Mammary epithelial cell (primary cell): ENCODE measurements at regions of chr17 and their contacts with region 1.

Region 1: DNA sequence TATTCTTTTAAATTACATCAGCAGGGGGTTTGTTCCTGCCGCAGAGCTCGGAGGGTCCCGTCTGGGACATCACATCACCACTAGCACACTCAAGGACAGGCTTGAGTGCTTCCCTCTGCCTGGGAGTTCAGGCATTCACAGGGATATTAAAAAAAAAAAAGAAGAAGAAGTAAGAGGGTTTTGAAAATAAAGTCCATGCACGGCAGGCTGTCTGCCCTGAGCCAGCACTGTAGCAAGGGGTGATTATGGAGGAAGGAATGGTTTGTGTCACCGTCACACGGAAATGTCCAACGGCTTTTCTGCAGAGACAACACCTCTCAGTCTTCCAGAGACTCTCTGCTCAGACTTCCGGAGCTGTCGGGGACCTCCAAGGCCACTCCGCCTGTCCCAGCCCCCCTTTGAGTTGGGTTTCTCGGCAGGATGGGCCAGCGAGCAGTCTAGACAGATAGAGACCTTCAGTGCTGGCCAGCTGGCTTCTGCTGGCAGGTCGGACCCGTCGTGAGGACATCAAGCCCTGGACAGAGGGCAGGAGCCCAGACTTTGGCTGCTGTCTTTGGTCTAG is 33.6 kb downstream of the MEOX1 start:
- DNase-seq: no peak
- H3K4me3 ChIP-seq: no peak overlapping the region
- H3K27ac ChIP-seq: no peak overlapping the region
- H3K4me1 ChIP-seq: no peaks in the 10 kb centered on the region
- H3K27me3 ChIP-seq: no peaks in the 10 kb centered on the region
- CTCF ChIP-seq: no peak

Region 2: DNA sequence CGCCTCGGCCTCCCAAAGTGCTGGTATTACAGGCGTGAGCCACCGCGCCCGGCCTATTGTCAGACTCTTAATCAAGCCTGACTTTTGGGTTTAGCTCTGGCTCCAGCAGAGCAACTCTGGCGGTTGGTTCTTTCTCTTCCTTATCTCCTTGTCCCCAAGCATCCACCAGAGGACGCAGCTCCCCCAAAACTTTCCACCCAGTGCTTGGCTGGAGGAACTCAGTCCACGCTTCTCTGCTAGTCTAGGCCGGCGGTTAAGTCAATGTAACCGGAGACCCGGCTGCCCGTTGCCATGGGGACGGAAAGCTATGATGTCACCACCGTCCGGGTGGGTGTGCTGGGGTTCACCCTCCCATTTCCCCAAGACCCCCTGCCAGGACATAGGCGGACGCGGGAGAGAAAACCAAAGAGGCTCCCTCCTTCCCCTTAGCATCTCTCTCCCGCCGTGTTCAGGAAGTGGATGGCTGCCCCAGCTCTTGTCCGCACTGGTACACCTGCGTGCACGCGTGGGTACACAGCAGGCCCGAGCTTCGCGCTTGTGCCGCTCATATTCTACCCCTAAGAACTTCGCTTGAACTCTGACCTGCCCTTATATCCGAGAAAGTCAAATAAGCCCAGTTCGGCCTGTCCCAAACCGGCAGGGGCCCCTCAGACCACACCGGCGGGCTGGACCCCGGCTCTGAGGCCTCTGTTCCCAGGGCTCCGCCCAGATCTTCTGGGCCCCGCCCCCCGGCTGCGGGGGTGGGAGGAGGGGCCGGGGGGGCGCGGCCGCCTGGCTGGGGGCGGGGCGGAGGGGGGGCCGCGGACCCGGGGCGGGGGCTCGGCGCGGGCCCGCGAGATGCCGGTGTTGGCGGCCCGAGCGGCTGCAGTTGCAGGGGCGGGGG is 603.5 kb before region 1 on chr17 and contains the start of gene RND2:
- CTCF ChIA-PET with region 1: no interaction called
- dilution Hi-C with region 1: no loop called
- in situ Hi-C with region 1: no loop called
- intact Hi-C with region 1: no loop called
- DNase-seq: peak; percentile 84
- H3K4me3 ChIP-seq: peak within 1 kb of the TSS; percentile 50 to 60 (median 52)
- H3K27ac ChIP-seq: peak within 1 kb of the TSS; percentile 47
- H3K4me1 ChIP-seq: peaks cover 15% of the 10 kb centered on the region
- H3K27me3 ChIP-seq: no peaks in the 10 kb centered on the region
- CTCF ChIP-seq: peak; percentile 62 to 87
- total RNA-seq, gene RND2: 0.17 to 0.85 TPM

Region 3: DNA sequence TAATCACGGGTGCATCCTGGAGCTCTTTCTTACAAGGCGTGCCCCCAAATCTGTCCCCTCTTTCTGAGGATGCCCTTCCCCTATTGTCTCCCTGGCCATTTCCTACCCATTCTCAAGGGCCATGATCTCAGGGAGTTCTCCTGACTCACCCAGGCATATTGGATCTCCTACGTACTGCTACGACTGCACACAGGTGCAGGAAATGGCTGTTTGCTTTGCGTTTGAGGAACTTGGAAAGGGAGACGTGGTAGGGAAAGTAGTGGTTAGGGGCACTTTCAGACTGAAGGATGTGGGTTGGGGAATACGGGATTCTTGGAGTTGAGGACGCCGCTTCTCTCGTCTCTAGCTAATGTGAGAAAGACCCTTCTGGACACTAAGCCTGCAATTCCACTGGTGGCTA is 52.3 kb after region 1 on chr17:
- CTCF ChIA-PET with region 1: no interaction called
- dilution Hi-C with region 1: loop called (anchors 10 kb)
- in situ Hi-C with region 1: no loop called
- intact Hi-C with region 1: no loop called
- DNase-seq: no peak
- H3K4me3 ChIP-seq: no peak overlapping the region
- H3K27ac ChIP-seq: no peak overlapping the region
- H3K4me1 ChIP-seq: no peaks in the 10 kb centered on the region
- H3K27me3 ChIP-seq: no peaks in the 10 kb centered on the region
- CTCF ChIP-seq: no peak

Region 4: DNA sequence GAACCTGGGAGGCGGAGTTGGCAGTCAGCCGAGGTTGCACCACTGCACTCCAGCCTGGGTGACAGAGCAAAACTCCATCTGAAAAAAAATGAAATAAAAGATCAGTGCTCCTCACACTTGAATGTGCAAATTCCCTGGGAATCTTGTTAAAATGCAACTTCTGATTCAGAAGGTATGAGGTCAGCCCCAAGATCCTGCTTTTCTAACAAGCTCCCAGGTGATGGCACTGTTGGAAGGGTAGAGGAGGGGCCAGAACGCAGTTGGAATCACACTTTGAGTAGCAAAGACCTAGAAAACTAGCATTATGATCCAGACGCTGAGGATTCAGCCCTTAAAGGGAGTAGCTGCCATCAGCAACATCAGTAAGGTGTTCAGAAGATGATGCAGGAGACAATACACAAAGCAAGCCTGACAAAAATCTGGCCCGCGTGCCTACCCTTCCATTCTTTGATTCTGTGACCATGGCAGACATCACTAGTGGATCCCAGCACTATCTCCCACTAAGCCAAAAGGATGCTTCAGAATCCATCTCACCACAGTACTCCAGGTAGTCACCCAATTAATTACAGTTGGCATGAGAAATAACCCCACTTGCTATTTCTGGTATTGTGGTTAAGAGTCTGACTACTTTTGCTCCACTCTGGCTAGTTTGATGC is 995.0 kb after region 1 on chr17:
- CTCF ChIA-PET with region 1: no interaction called
- dilution Hi-C with region 1: no loop called
- in situ Hi-C with region 1: no loop called
- intact Hi-C with region 1: no loop called
- DNase-seq: no peak
- H3K4me3 ChIP-seq: no peak overlapping the region
- H3K27ac ChIP-seq: no peak overlapping the region
- H3K4me1 ChIP-seq: no peaks in the 10 kb centered on the region
- H3K27me3 ChIP-seq: no peaks in the 10 kb centered on the region
- CTCF ChIP-seq: peak in 1 of 2 donors; percentile 26